Posterior vena cava (tissue), 2 donors: ENCODE measurements at regions of chr10 and their contacts with region 1.

Region 1: DNA sequence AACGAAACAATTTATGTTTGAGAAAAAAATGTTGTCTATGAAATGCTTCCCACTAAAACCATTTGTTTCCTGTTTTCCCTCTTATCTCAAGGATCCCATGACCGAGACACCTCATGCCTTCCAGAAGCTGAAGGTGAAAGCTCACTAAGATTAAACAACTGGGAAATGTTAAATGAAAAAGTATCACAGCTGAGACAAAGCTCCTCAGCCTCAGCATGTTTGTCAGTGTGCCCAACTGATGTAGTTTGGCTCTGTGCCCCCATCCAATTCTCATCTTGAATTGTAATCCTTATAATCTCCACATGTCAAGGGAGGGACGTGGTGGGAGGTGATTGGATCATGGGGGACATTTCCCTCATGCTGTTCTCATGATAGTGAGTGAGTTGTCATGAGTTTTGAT is 327.3 kb downstream of the HTR7 start:
- DNase-seq: no peak

Region 2: DNA sequence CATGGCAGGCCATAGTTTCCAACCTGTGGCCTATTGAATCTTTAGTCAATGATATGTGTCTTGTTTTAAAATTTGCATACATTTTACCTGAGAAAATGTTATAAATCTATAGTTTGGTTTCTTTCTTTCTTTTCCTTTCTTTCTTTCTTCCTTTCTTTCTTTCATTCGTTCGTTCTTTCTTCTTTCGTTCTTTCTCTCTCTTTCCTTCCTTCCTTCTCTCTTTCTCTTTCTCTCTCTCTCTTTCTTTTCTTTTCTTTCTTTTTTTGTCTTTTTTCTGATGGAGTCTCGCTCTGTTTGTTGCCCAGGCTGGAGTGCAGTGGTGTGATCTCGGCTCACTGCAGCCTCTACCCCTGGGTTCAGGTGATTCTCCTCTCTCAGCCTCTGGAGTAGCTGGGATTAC is 1910.1 kb after region 1 on chr10:
- intact Hi-C with region 1: loop called in 1 of 2 experiments (anchors 10 kb)
- DNase-seq: no peak